Calu3 (cell line): ENCODE measurements at regions of chr11 and their contacts with region 1.

Region 1: DNA sequence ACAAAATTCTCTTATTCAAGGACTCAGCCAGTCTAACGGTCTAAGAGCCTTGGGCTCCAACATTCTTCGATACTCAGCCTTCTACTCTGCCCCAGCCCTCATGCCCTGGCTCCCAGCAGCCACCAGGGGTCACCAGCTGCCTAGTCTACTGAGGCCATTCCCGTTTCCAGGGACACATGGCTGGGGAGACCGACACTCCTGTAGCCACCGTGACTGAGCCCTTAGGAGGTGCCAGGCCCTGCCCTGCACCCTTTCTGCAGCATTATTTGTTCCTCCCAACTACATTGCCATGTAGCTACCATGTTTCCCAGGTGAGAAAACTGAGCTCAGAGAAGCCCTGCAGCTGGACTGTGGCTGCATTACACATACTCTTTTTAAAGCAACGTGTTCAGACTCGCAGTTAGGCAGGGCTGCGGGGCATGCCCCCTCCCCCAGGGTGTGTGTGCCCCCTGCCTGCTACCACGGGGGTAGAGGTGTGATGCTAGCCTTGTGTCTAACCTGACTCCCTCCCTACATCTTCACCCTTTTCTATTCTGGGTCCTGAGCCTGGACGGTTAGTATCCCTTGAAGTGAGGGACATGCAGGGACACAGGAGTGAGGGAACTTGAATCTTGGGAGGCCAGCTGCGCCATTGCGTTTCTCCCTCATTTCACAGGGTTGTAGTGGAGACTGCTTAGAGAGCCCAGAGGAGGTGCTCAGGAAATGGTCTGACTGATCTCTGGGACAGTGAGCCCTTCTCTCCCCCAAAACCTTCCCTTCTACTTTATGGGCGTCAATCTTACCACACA is 17.5 kb downstream of the ATG16L2 start:
- DNase-seq: peak; percentile 87
- H3K4me3 Mint-ChIP-seq: no peak overlapping the region
- H3K27ac Mint-ChIP-seq: no peak overlapping the region
- H3K4me1 Mint-ChIP-seq: no peaks in the 10 kb centered on the region
- H3K27me3 Mint-ChIP-seq: no peaks in the 10 kb centered on the region
- CTCF ChIP-seq: peak; percentile 84

Region 2: DNA sequence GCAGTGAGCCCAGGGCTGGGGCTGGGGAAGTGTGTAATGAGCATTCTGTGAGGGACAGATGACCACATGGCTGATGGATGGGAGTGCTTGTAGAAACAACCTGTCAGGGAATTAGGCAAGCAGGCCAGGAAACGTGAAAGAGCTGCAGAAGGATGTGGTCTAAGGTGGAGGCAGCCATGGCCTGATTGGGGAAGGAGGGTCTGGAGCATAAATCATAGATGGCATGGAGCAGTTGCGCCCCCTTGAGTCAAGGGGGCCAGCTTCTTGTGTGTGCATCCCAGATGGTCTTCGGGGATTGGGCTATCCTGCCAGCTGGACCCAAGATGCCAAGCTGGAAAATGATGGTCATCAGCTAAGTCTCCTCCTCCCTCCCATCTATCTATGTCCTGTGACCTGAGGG is 278.0 kb before region 1 on chr11:
- CTCF ChIA-PET with region 1: no interaction called
- intact Hi-C with region 1: no loop called
- DNase-seq: no peak
- H3K4me3 Mint-ChIP-seq: no peak overlapping the region
- H3K27ac Mint-ChIP-seq: no peak overlapping the region
- H3K4me1 Mint-ChIP-seq: no peaks in the 10 kb centered on the region
- H3K27me3 Mint-ChIP-seq: peaks cover 87% of the 10 kb centered on the region
- CTCF ChIP-seq: no peak

Region 3: DNA sequence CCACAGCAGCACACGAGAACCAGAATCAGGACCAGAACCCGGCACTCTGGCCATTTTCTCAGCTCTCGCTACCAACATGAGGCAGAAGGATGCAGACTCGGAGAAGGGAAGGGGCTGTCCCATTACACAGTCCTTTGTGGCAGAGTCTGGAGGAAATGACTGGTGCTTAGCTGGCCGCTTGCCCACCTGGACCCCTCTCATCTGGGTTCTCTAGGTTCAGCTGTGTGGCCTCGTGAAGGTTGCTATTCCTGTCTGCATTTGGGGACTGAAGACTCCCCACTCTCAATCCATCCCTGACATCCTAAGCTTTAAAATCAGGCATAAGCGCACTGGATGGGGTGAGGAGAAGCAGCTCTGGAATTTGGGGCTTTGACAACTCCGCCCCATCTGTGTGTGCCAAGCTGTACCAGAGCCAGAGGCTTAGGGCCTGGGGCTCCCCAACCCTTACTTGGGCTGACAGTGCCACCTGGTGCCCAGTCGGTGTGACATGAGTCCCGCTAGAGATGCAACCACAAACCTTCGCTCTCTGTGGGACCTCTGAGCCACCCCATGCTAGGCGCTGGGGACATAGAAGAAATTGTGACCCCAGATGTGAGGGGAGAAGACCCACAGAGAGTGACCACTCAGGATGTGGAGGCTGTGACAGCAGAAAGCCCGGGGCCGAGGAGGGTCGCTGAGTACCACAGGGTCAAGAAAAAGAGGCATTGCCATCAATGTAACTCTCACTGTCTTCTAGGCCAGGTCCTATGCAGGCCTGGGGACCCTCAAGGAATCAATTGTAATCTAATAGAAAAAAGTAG is 346.3 kb after region 1 on chr11:
- CTCF ChIA-PET with region 1: interaction called, 38 read pairs
- intact Hi-C with region 1: loop called (anchors 1 kb)
- DNase-seq: peak; percentile 82
- H3K4me3 Mint-ChIP-seq: no peak overlapping the region
- H3K27ac Mint-ChIP-seq: no peak overlapping the region
- H3K4me1 Mint-ChIP-seq: peaks cover 13% of the 10 kb centered on the region
- H3K27me3 Mint-ChIP-seq: peaks cover 18% of the 10 kb centered on the region
- CTCF ChIP-seq: peak; percentile 76

Region 4: DNA sequence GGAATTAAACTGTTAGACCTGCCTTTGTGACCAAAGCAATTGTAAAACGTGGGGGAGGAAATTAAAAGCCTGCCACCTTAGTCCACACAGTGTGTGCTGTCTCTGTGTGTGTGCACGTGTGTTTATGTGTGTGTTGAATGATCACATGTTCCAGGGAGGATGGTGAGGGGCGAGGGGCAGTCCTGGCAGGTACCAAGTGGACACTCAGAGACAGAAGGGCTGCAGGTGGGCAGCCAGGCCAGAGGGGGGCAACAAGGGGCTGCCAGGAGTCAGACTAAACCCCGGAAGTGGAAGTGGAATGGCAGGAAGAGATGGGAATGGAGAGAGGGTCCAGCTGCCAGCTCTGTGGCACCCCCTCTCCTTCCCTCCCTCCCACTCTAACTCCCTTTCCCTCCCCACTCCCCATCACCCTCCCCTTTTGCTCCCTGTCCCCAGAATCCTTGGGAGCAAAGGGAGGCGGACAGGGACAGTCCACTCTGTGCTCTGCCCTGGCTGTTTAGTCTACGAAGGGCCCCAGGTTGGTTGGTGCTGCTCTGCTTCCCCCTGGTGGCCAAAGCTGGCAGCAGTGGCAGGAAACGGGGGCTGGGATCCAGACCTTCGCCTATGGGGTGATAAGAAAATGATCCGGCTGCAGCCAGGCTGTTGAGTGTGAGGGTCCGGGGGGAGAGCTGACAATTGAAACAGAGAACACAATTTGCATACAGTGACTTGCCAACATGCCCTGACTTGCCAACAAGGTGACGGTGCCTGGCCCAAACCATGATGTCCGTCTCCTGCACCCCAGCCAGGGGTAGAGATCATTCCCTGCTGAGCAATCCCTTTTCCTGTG is 410.8 kb after region 1 on chr11:
- CTCF ChIA-PET with region 1: interaction called, 3 read pairs
- intact Hi-C with region 1: loop called (anchors 5 kb)
- DNase-seq: peak; percentile 86
- H3K4me3 Mint-ChIP-seq: no peak overlapping the region
- H3K27ac Mint-ChIP-seq: peak overlapping the region; percentile 14
- H3K4me1 Mint-ChIP-seq: peaks cover 19% of the 10 kb centered on the region
- H3K27me3 Mint-ChIP-seq: peaks cover 30% of the 10 kb centered on the region
- CTCF ChIP-seq: peak; percentile 85